ENCODE measurements at regions of chr3 and their contacts with region 1.

Region 1: GRCh38 chr3:143847787-143848631 is at the start of gene SLC9A9:
- DNase-seq: peak; percentile 57
- H3K4me3 Mint-ChIP-seq: peak within 1 kb of the TSS; percentile 92
- H3K27ac Mint-ChIP-seq: peak within 1 kb of the TSS; percentile 90
- H3K4me1 Mint-ChIP-seq: peaks cover 52% of the 10 kb centered on the region
- H3K27me3 Mint-ChIP-seq: no peaks in the 10 kb centered on the region
- total RNA-seq, gene SLC9A9: 1.3 to 1.6 TPM

Region 2: GRCh38 chr3:143171141-143171970 is 676.7 kb before region 1 on chr3:
- CTCF ChIA-PET with region 1: no interaction called
- POLR2A ChIA-PET with region 1: no interaction called
- intact Hi-C with region 1: loop called (anchors 5 kb)
- DNase-seq: no peak
- H3K4me3 Mint-ChIP-seq: no peak overlapping the region
- H3K27ac Mint-ChIP-seq: peak overlapping the region; percentile 78
- H3K4me1 Mint-ChIP-seq: peaks cover 45% of the 10 kb centered on the region
- H3K27me3 Mint-ChIP-seq: no peaks in the 10 kb centered on the region

Region 3: DNA sequence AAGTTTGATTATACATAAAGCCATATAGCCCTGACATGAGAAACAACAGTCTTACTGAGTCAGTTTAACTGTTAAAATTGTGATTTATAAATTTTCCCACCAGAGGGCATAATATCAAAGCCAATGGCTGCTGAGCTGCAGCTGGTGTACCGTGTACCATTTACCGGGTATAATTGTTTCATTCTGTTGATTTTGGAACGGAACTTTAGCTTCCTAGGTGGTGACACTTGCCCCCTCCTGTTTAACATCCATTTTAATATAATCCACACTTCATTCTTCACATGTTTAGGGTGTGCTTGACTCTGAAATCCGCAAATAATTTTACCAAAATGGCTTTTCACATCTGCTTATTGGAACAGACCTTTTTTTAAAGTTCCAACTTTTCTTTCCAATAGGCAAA is 72.5 kb before region 1 on chr3:
- CTCF ChIA-PET with region 1: interaction called, 4 read pairs
- POLR2A ChIA-PET with region 1: no interaction called
- intact Hi-C with region 1: loop called (anchors 1 kb)
- DNase-seq: no peak
- H3K4me3 Mint-ChIP-seq: no peak overlapping the region
- H3K27ac Mint-ChIP-seq: no peak overlapping the region
- H3K4me1 Mint-ChIP-seq: peaks cover 3% of the 10 kb centered on the region
- H3K27me3 Mint-ChIP-seq: no peaks in the 10 kb centered on the region

Region 4: GRCh38 chr3:143795874-143796273 is 52.1 kb before region 1 on chr3:
- CTCF ChIA-PET with region 1: no interaction called
- POLR2A ChIA-PET with region 1: no interaction called
- intact Hi-C with region 1: no loop called
- DNase-seq: peak; percentile 13
- H3K4me3 Mint-ChIP-seq: no peak overlapping the region
- H3K27ac Mint-ChIP-seq: no peak overlapping the region
- H3K4me1 Mint-ChIP-seq: peaks cover 4% of the 10 kb centered on the region
- H3K27me3 Mint-ChIP-seq: no peaks in the 10 kb centered on the region

Region 5: GRCh38 chr3:143809121-143809621 is 38.8 kb before region 1 on chr3:
- CTCF ChIA-PET with region 1: no interaction called
- POLR2A ChIA-PET with region 1: no interaction called
- intact Hi-C with region 1: loop called (anchors 1 kb)
- DNase-seq: no peak
- H3K4me3 Mint-ChIP-seq: no peak overlapping the region
- H3K27ac Mint-ChIP-seq: no peak overlapping the region
- H3K4me1 Mint-ChIP-seq: peaks cover 12% of the 10 kb centered on the region
- H3K27me3 Mint-ChIP-seq: no peaks in the 10 kb centered on the region

Region 6: DNA sequence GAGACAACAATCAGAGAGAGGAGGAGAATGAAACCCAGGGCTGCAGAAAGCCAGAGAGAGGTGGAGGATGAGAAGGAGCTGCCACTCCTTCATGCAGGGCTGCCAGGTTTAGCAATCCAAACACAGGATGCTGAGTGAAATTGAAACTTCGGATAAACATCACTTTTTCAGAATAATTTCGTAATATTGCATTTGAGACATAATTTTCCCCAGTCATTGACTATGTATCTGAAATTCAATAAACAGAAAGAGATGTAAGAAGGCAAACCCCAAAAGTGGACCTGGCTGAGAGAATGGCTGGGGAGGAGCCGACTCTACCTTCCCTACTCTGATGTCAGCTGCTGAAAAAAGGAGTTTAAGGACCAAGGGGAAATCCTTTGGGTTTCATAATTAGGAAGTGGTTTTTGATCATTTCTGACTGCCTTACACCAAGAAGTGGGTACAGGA is 33.5 kb before region 1 on chr3:
- CTCF ChIA-PET with region 1: no interaction called
- POLR2A ChIA-PET with region 1: no interaction called
- intact Hi-C with region 1: loop called (anchors 1 kb)
- DNase-seq: peak; percentile 36
- H3K4me3 Mint-ChIP-seq: no peak overlapping the region
- H3K27ac Mint-ChIP-seq: peak overlapping the region; percentile 25
- H3K4me1 Mint-ChIP-seq: peaks cover 13% of the 10 kb centered on the region
- H3K27me3 Mint-ChIP-seq: no peaks in the 10 kb centered on the region

Region 7: DNA sequence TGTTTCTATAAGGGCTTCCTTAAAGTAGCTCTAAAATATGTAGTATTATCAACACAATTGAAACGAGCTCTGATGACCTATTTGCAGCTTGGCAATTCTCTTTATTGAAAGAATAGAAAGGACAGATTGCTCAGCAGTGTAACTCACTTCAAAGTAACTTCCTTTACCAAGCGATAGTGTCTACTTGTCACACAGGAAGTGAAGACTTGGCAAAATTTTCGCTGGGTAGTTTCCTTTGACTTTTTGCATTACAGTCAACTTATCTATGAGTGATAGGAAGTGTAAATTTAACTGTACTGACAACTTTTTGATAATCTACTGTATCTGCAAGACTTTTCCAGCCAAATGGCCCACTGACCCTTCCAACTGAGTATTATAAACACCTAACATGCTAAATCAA is 22.5 kb before region 1 on chr3:
- CTCF ChIA-PET with region 1: no interaction called
- POLR2A ChIA-PET with region 1: interaction called, 5 read pairs
- intact Hi-C with region 1: loop called (anchors 1 kb)
- DNase-seq: no peak
- H3K4me3 Mint-ChIP-seq: no peak overlapping the region
- H3K27ac Mint-ChIP-seq: peak overlapping the region; percentile 76
- H3K4me1 Mint-ChIP-seq: peaks cover 56% of the 10 kb centered on the region
- H3K27me3 Mint-ChIP-seq: no peaks in the 10 kb centered on the region

Region 8: DNA sequence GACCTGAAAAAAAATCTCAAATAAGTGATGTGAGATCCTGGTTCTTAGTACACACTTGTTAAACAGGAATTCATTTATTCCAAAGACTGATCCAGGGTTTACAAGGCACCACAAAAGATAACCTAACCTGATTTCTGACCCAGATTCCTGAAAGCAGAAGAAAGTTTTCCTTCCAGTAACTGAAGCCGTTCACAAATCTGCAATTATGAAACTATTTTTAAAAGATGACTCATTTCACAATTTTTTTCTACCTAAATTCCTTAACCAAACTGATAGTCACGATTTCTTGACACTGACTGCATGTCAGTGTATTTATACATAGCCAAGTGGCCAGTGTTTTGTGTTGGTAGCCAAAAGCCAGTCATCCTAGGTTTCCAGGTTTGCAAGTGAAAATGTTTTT is 16.8 kb before region 1 on chr3:
- CTCF ChIA-PET with region 1: interaction called, 3 read pairs
- POLR2A ChIA-PET with region 1: no interaction called
- intact Hi-C with region 1: loop called (anchors 1 kb)
- DNase-seq: no peak
- H3K4me3 Mint-ChIP-seq: peak overlapping the region; percentile 17
- H3K27ac Mint-ChIP-seq: peak overlapping the region; percentile 20
- H3K4me1 Mint-ChIP-seq: peaks cover 54% of the 10 kb centered on the region
- H3K27me3 Mint-ChIP-seq: no peaks in the 10 kb centered on the region

Measured in activated CD4-positive, alpha-beta memory T cell treated with anti-CD3 and anti-CD28 coated beads for 36 hours (primary cell).